Mammary epithelial cell (primary cell): ENCODE measurements at regions of chr14 and their contacts with region 1.

Region 1: GRCh38 chr14:22872033-22872832 is 693 bp downstream of the LRP10 start:
- DNase-seq: peak; percentile 85
- H3K4me3 ChIP-seq: peak overlapping the region; percentile 85 to 90 (median 87)
- H3K27ac ChIP-seq: peak overlapping the region; percentile 85
- H3K4me1 ChIP-seq: peaks cover 12% of the 10 kb centered on the region
- H3K27me3 ChIP-seq: no peaks in the 10 kb centered on the region
- CTCF ChIP-seq: peak; percentile 98

Region 2: GRCh38 chr14:22852940-22853767 is 19.1 kb before region 1 on chr14:
- CTCF ChIA-PET with region 1: interaction called, 3 read pairs
- dilution Hi-C with region 1: no loop called
- in situ Hi-C with region 1: no loop called
- intact Hi-C with region 1: loop called (anchors 1 kb)
- DNase-seq: peak; percentile 80
- H3K4me3 ChIP-seq: peak overlapping the region in 2 of 3 experiments; percentile 7 to 52
- H3K27ac ChIP-seq: peak overlapping the region; percentile 90
- H3K4me1 ChIP-seq: peaks cover 54% of the 10 kb centered on the region
- H3K27me3 ChIP-seq: no peaks in the 10 kb centered on the region
- CTCF ChIP-seq: peak; percentile 91 to 93

Region 3: DNA sequence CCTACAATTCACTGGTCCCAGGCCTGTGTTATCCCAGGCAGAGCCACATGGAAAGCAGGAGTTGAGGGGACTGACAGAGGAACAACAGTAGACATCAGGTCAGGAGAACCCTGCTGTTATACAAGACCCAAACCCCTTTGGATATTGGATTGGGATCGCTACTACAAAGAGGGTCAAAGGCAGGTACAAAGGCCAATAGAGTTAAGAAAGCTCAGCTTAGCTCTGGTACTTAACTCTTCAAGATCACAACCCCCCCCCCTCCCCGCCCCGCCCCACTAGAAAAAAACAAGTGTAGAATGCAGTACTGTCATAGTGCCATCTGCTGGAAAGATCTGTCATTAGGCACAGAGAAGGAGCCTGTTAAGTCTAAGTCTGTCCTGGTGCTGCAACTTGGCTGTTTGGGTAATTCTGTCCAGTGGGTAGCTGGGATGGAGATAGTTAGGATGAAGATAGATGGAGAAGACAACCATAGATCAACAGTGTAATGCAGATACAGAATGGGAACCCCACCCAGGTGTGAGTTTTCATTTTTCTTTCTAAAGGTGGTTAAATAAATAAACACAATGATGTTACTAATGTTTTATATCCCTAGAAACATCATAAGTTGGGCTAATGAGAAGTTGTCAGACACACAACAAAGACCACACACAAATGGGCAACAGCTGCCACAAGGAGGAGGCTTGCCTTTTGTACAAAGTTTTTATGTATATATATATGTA is 28.0 kb after region 1 on chr14:
- CTCF ChIA-PET with region 1: interaction called, 4 read pairs
- dilution Hi-C with region 1: no loop called
- in situ Hi-C with region 1: no loop called
- intact Hi-C with region 1: loop called (anchors 1 kb)
- DNase-seq: peak; percentile 56
- H3K4me3 ChIP-seq: no peak overlapping the region
- H3K27ac ChIP-seq: no peak overlapping the region
- H3K4me1 ChIP-seq: peaks cover 20% of the 10 kb centered on the region
- H3K27me3 ChIP-seq: no peaks in the 10 kb centered on the region
- CTCF ChIP-seq: peak; percentile 66 to 68

Region 4: DNA sequence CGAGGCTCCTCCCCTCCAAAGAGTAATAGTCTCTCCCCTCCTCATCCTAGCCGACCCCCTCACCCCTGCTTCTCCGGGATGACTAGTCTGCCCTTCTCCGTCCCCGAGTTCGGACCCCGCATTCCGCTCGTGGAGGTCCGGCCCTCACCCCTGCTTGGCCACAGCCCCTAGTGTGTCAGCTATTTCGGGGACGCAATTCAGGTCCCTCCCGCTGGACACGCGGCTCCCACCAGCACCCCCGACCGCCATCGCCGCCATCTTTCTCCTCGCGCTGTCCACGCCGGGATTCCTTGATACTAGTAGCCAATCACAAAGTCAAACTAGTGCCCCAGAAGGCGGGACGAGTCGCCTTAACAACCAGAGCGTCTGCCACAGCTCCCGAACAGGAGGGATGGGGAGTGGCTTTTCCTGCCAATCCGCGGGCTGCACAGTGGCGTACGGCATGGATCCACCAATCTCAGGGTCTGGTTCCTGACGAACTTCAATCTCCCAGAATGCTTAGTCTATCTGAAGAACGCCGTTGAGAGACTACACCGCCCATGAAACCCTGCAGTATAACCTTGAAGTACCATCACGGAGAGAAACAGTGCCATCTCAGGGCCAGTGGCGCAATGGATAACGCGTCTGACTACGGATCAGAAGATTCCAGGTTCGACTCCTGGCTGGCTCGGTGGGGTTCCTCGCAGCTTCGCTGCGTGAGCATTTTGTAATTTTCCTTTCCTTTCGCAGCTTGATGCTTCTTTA is 57.0 kb after region 1 on chr14 and contains the start of gene PRMT5:
- CTCF ChIA-PET with region 1: no interaction called
- dilution Hi-C with region 1: no loop called
- in situ Hi-C with region 1: no loop called
- intact Hi-C with region 1: loop called (anchors 1 kb)
- DNase-seq: peak; percentile 99
- H3K4me3 ChIP-seq: peak within 1 kb of the TSS; percentile 87 to 97 (median 94)
- H3K27ac ChIP-seq: peak within 1 kb of the TSS; percentile 87
- H3K4me1 ChIP-seq: peaks cover 27% of the 10 kb centered on the region
- H3K27me3 ChIP-seq: no peaks in the 10 kb centered on the region
- CTCF ChIP-seq: no peak
- total RNA-seq, gene PRMT5: 61.3 to 120 TPM